ENCODE measurements at regions of chr2 and their contacts with region 1.

Region 1: DNA sequence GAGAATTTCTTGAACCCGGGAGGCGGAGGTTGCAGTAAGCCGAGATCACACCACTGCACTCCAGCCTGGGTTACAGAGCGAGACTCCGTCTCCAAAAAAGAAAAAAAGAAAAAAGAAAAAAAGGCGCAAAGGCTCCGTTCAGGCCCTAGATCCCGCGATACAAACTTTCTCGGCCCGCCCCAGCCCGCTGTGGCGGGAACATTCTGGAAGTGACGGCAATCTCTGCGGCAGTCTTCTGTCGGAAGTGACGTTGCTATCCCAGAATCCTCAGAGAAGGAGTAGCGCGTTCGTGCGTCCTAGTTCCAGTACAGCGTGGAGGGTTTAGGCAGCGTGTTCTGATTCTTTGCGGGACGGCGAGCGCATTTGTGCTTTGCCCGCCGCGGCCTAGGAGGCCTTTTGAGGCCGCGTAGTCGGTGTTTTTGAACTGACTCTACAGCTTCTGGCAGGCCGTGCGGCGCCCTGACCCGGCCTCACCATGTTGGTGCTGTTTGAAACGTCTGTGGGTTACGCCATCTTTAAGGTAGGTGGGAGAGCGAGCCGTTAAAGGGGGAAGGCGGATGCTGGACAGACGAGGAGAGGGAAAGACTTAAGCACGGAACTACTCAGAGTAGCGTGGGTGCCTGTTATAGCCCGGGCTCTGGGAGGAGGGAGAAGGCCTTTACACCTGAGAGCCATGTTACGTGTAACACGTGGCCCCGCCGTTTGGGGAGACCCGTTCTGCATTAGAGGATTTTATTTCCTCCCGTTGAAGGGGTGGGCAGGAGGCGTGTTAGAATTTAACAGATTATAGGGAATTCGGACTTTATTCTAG is at the start of gene NOP58:
- DNase-seq: peak; percentile 95 to 96
- H3K4me3 ChIP-seq: peak within 1 kb of the TSS; percentile 92
- H3K4me3 Mint-ChIP-seq: no peak within 1 kb of the TSS
- H3K27ac Mint-ChIP-seq: no peak within 1 kb of the TSS
- H3K4me1 ChIP-seq: peaks cover 16% of the 10 kb centered on the region; the same call in 1 of the 2 replicates
- H3K4me1 Mint-ChIP-seq: no peaks in the 10 kb centered on the region
- H3K27me3 ChIP-seq: no peaks in the 10 kb centered on the region
- H3K27me3 Mint-ChIP-seq: no peaks in the 10 kb centered on the region
- CTCF ChIP-seq: no peak
- total RNA-seq, gene NOP58: 136 and 147 TPM in 2 replicates

Region 2: GRCh38 chr2:202221873-202222272 is 43.8 kb before region 1 on chr2:
- CTCF ChIA-PET with region 1: no interaction called
- POLR2A ChIA-PET with region 1: no interaction called
- intact Hi-C with region 1: loop called (anchors 5 kb)
- DNase-seq: no peak
- H3K4me3 ChIP-seq: no peak overlapping the region
- H3K4me3 Mint-ChIP-seq: no peak overlapping the region
- H3K27ac Mint-ChIP-seq: no peak overlapping the region
- H3K4me1 ChIP-seq: 0 out of 2 replicates have a peak, but pooled peaks cover 3% of the 10 kb centered on the region
- H3K4me1 Mint-ChIP-seq: peaks cover 7% of the 10 kb centered on the region
- H3K27me3 ChIP-seq: no peaks in the 10 kb centered on the region
- H3K27me3 Mint-ChIP-seq: no peaks in the 10 kb centered on the region
- CTCF ChIP-seq: no peak

Region 3: GRCh38 chr2:202238234-202239197 is 27.2 kb before region 1 on chr2 and contains the start of gene SUMO1:
- CTCF ChIA-PET with region 1: no interaction called
- POLR2A ChIA-PET with region 1: no interaction called
- intact Hi-C with region 1: loop called (anchors 1 kb)
- DNase-seq: peak; percentile 88 to 89
- H3K4me3 ChIP-seq: peak within 1 kb of the TSS; percentile 54
- H3K4me3 Mint-ChIP-seq: peak within 1 kb of the TSS; percentile 96
- H3K27ac Mint-ChIP-seq: peak within 1 kb of the TSS; percentile 93
- H3K4me1 ChIP-seq: peaks cover 8% of the 10 kb centered on the region
- H3K4me1 Mint-ChIP-seq: no peaks in the 10 kb centered on the region
- H3K27me3 ChIP-seq: no peaks in the 10 kb centered on the region
- H3K27me3 Mint-ChIP-seq: no peaks in the 10 kb centered on the region
- CTCF ChIP-seq: no peak
- total RNA-seq, gene SUMO1: 137 and 143 TPM in 2 replicates

Measured in Caco-2 (cell line).